ENCODE measurements at regions of chr6 and their contacts with region 1.

Region 1: GRCh38 chr6:3162565-3163247 is 5.4 kb upstream of the TUBB2A start:
- DNase-seq: peak; percentile 77 to 83 (median 82)
- ATAC-seq: peak; percentile 58
- H3K4me3 ChIP-seq: peak overlapping the region in 1 of 2 donors; percentile 43
- H3K27ac ChIP-seq: peak overlapping the region; percentile 88 to 98 (median 96)
- H3K4me1 ChIP-seq: peaks cover 33% of the 10 kb centered on the region
- H3K27me3 ChIP-seq: no peaks in the 10 kb centered on the region
- CTCF ChIP-seq: peak in 5 of 7 experiments; percentile 14 to 40 (median 33)
- POLR2A ChIP-seq: peak; percentile 72 to 87 (median 85)

Region 2: DNA sequence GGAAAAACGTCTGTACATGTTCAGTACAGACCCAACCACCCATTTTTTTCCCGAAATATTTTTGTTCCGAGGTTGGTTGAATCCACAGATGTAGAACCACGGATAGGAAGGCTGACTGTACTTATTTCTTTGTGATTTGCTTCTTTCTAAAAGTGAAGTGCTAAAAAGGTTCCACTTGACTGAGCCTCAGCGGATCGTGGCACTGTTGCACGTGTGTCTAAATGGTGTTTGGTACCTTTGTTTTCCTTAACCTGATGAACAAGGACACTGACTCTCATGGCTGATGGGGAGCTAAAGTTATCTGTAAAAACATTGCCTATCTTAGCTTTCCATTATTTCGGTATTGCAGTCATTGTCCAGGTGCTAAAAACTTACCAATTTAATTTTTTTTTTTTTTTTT is 38.0 kb before region 1 on chr6:
- intact Hi-C with region 1: loop called (anchors 5 kb)
- DNase-seq: no peak
- ATAC-seq: no peak
- H3K4me3 ChIP-seq: no peak overlapping the region
- H3K27ac ChIP-seq: no peak overlapping the region
- H3K4me1 ChIP-seq: peaks cover 47% of the 10 kb centered on the region
- H3K27me3 ChIP-seq: no peaks in the 10 kb centered on the region
- CTCF ChIP-seq: no peak
- POLR2A ChIP-seq: no peak

Region 3: GRCh38 chr6:3258720-3259490 is 96.2 kb after region 1 on chr6 and contains the start of gene PSMG4:
- intact Hi-C with region 1: loop called (anchors 10 kb)
- DNase-seq: peak; percentile 94 to 97 (median 96)
- ATAC-seq: peak; percentile 96
- H3K4me3 ChIP-seq: peak within 1 kb of the TSS; percentile 84 to 93
- H3K27ac ChIP-seq: peak within 1 kb of the TSS; percentile 84 to 89 (median 86)
- H3K4me1 ChIP-seq: peaks cover 35% of the 10 kb centered on the region
- H3K27me3 ChIP-seq: no peaks in the 10 kb centered on the region
- CTCF ChIP-seq: no peak
- POLR2A ChIP-seq: peak; percentile 39 to 76 (median 68)
- total RNA-seq, gene PSMG4: 10.9 to 11.2 TPM

Measured in body of pancreas (tissue), 4 donors.